ENCODE measurements at regions of chr12 and their contacts with region 1.

Region 1: GRCh38 chr12:88194868-88195267 is 52.8 kb downstream of the TMTC3 start:
- DNase-seq: no peak
- ATAC-seq: no peak
- H3K4me3 ChIP-seq: no peak overlapping the region
- H3K27ac ChIP-seq: no peak overlapping the region
- H3K4me1 ChIP-seq: no peaks in the 10 kb centered on the region
- H3K27me3 ChIP-seq: no peaks in the 10 kb centered on the region
- CTCF ChIP-seq: no peak

Region 2: DNA sequence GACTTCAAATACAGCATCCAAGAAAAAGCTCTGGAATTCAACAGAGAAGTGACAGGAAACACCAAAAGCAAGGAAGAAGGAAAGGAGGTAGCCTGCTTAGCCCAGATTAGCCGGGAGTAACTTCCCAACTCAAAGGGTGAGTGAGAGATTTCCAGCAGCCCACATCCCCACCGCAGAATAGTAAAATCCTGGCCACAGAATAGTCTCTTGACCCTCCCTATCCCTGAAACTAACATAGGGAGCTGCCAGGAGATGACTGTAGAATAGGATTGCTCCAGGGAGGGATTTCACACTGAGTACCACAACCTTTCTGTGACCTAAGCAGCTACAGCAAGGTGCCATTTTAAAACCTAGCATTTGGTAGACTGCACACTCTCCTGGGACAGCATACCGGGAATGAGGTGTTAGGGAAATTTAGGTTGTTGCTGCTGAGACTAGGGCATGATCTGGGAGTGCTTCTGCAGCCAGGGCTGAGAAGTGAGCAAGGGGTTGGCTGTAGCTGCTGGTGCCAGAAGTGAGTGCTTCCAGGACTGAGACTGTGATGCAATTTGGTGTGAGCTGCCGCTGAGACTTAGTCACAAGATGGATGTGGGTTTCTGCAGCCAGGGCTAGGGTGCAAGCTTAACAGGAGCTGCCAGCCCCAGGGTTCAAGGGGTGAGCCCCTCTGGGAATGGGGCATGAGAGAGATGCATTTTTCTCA is 13.2 kb after region 1 on chr12:
- CTCF ChIA-PET with region 1: no interaction called
- POLR2A ChIA-PET with region 1: no interaction called
- intact Hi-C with region 1: no loop called
- DNase-seq: no peak
- ATAC-seq: no peak
- H3K4me3 ChIP-seq: no peak overlapping the region
- H3K27ac ChIP-seq: no peak overlapping the region
- H3K4me1 ChIP-seq: no peaks in the 10 kb centered on the region
- H3K27me3 ChIP-seq: no peaks in the 10 kb centered on the region
- CTCF ChIP-seq: no peak

Region 3: GRCh38 chr12:88241862-88242570 is 47.1 kb after region 1 on chr12:
- CTCF ChIA-PET with region 1: no interaction called
- POLR2A ChIA-PET with region 1: no interaction called
- intact Hi-C with region 1: loop called (anchors 5 kb)
- DNase-seq: peak; percentile 98
- ATAC-seq: peak; percentile 81
- H3K4me3 ChIP-seq: no peak overlapping the region
- H3K27ac ChIP-seq: peak overlapping the region; percentile 78
- H3K4me1 ChIP-seq: peaks cover 38% of the 10 kb centered on the region
- H3K27me3 ChIP-seq: no peaks in the 10 kb centered on the region
- CTCF ChIP-seq: no peak

Measured in PC-3 (cell line).